CD4-positive, alpha-beta T cell (primary cell): ENCODE measurements at regions of chr11 and their contacts with region 1.

Region 1: GRCh38 chr11:12664385-12664784 is 9.8 kb upstream of the TEAD1 start:
- DNase-seq: no peak
- ATAC-seq: no peak
- H3K4me3 ChIP-seq: no peak overlapping the region
- H3K4me3 Mint-ChIP-seq: no peak overlapping the region
- H3K27ac ChIP-seq: no peak overlapping the region
- H3K27ac Mint-ChIP-seq: no peak overlapping the region
- H3K4me1 ChIP-seq: no peaks in the 10 kb centered on the region
- H3K4me1 Mint-ChIP-seq: no peaks in the 10 kb centered on the region
- H3K27me3 ChIP-seq: peaks cover 38 to 45% of the 10 kb centered on the region in 2 experiments
- H3K27me3 Mint-ChIP-seq: peaks cover 82% of the 10 kb centered on the region
- CTCF ChIP-seq: no peak

Region 2: DNA sequence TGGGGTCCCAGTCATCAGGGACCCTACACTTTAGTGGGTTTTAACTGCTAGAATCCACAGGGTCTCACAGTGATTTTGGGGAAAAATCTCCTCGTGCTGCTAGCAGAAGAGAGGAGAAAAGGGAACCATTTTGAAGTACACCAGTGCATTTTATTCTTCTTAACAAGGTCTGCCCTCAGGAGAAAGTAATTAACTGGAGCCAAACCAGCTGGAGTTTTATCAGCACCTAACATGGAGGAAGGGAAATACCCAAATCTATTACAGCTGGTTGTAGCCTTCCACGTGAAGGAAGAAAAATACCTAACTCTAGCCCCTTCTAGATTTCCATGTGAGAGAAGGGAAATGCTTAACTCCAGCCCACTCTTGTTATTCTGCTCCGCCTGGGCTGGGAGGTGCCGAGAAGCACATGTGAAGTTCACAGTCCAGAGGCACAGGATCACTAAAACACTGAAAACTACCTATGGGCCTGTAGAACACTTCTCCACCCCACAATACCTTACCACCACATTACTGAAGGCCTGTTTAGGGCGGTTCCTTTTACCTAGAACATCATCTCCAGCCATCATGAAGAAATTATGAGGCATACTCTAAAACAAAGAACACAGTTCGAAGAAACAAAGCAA is 21.5 kb before region 1 on chr11:
- CTCF ChIA-PET with region 1: no interaction called
- POLR2A ChIA-PET with region 1: no interaction called
- intact Hi-C with region 1: loop called in 1 of 2 experiments (anchors 1 kb)
- DNase-seq: no peak
- ATAC-seq: no peak
- H3K4me3 ChIP-seq: no peak overlapping the region
- H3K4me3 Mint-ChIP-seq: no peak overlapping the region
- H3K27ac ChIP-seq: no peak overlapping the region
- H3K27ac Mint-ChIP-seq: no peak overlapping the region
- H3K4me1 ChIP-seq: no peaks in the 10 kb centered on the region
- H3K4me1 Mint-ChIP-seq: no peaks in the 10 kb centered on the region
- H3K27me3 ChIP-seq: no peaks in the 10 kb centered on the region
- H3K27me3 Mint-ChIP-seq: peaks cover 18% of the 10 kb centered on the region
- CTCF ChIP-seq: no peak